ENCODE measurements at regions of chr5 and their contacts with region 1.

Region 1: GRCh38 chr5:33588654-33589372 is 148.0 kb downstream of the TARS1 start:
- DNase-seq: no peak
- H3K4me3 ChIP-seq: no peak overlapping the region
- H3K27ac ChIP-seq: no peak overlapping the region
- H3K4me1 ChIP-seq: no peaks in the 10 kb centered on the region
- H3K27me3 ChIP-seq: no peaks in the 10 kb centered on the region
- CTCF ChIP-seq: no peak
- POLR2A ChIP-seq: no peak

Region 2: DNA sequence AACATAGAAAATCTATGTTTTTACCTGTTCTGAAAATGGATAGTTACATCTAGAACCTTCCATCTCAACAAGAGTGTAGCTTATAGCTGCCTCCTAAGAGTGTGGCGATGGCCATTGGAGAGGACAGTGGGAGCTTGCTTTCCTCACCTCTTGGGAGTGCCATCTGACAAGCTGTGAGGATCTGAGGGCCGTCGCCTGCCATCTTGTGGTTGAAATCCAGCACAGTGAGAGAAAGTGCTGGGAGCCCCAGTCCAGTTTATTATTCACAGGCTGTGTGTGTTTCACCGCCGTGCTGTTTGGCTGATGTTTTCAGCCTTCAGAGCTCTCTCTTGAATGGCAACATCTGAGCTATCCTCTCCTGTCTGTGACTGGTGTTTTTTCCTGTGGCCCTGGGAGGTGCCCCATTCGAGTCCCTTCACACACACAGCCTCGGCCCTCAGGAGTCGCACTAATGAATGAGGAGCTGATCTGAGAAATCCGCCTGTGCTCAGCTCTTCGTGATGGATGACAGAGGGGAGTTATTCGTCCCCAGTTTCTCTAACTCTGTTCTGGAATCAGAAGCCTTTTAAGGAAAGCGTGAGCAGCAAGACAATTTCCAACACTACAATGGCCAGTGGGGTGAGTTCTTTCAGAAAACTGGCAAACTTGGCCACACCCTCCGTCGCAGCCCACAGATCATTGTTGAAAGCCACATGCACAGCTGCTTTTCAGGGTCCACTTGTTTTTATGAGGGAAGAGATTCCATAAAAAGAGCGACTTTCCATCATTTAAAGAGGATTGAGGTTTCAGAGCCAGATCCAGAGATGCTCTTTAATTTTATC is 1779.6 kb before region 1 on chr5:
- intact Hi-C with region 1: no loop called
- DNase-seq: no peak
- H3K4me3 ChIP-seq: no peak overlapping the region
- H3K27ac ChIP-seq: no peak overlapping the region
- H3K4me1 ChIP-seq: no peaks in the 10 kb centered on the region
- H3K27me3 ChIP-seq: no peaks in the 10 kb centered on the region
- CTCF ChIP-seq: peak in 1 of 3 experiments; percentile 63
- POLR2A ChIP-seq: no peak

Region 3: DNA sequence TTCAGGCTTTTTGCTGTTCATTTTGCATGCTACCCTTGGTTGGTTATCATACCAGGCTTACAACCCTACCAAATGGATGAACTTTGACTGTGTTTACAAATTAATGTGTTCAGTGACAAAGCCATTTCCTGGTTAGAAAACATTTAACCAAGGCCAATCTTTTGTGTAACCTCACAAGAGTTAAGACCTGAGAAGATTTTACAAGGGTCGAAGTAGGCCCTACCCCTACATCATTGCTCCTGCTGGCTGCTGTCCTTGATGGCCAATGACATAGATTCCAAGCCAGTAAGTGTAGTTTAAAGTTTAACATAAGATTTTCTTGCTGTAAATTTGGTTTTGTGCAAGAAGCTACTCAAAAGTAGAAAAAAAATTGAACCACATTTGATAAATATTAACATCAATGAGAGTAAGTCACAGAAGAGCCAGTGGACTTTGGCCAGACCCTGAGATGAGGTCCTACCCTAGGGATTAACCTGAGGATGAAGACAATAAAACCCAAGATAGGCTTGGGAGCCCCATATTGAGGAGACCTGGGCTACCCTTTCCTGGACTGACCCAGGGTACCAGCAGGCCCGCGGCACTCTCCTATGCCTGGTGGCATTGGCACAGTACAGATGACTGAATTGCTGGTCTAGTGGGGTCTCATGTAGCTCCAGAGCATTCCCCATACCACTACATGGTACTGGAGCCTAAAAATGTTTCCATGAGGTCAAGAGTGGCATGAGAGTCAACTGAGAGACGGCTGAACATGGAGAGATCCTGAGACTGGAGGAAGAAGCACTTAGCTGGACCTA is 445.9 kb after region 1 on chr5:
- intact Hi-C with region 1: loop called (anchors 5 kb)
- DNase-seq: no peak
- H3K4me3 ChIP-seq: no peak overlapping the region
- H3K27ac ChIP-seq: no peak overlapping the region
- H3K4me1 ChIP-seq: peaks cover 6% of the 10 kb centered on the region
- H3K27me3 ChIP-seq: no peaks in the 10 kb centered on the region
- CTCF ChIP-seq: no peak
- POLR2A ChIP-seq: no peak